Right lobe of liver (tissue), 6 donors: ENCODE measurements at regions of chr12 and their contacts with region 1.

Region 1: GRCh38 chr12:113912760-113913329 is 53.3 kb downstream of the RBM19 start:
- DNase-seq: peak in 2 of 3 donors; percentile 49 to 57
- ATAC-seq: peak; percentile 64 to 84 (median 78)
- H3K4me3 ChIP-seq: no peak overlapping the region
- H3K27ac ChIP-seq: no peak overlapping the region
- H3K4me1 ChIP-seq: no peaks in the 10 kb centered on the region
- H3K27me3 ChIP-seq: no peaks in the 10 kb centered on the region
- CTCF ChIP-seq: peak; percentile 68 to 83 (median 76)
- POLR2A ChIP-seq: no peak

Region 2: DNA sequence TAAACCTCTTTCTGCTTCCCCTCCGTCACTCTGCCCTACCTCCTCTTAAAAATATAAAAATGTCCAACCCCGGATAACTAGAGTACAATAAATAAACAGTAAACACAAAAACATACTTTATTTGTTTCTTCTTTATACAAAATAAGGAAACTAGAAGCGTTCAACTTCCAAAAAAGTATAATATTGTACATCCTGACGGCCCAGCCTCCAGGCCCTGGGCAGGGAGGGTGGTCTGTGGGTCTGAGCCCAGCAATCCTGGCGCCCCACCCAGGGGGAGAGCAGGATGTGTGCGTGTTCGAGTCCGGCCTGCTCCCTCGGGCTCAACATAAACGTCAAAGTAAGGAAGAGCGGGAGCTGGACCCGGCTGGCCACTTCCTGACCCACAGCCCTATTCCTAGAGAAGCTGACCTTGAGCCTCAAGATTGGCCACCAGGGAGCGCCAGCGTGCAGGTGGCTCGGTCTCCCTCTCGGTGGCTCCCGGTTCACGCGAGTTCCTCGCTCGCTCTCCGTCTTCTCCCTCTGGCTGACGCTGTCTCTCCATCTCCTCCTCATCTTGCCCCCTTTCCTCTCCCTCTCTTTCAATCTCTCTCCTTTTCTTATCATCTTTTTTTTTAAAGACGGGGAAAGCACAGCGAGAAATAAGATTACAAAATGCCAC is 450.6 kb before region 1 on chr12:
- intact Hi-C with region 1: loop called (anchors 10 kb)
- DNase-seq: peak; percentile 74 to 84 (median 77)
- ATAC-seq: peak; percentile 85 to 92 (median 90)
- H3K4me3 ChIP-seq: no peak overlapping the region
- H3K27ac ChIP-seq: no peak overlapping the region
- H3K4me1 ChIP-seq: peaks cover 0 to 12% (median 0%) of the 10 kb centered on the region in 4 donors
- H3K27me3 ChIP-seq: peaks cover 8 to 34% of the 10 kb centered on the region in 2 donors
- CTCF ChIP-seq: peak; percentile 57 to 90 (median 88)
- POLR2A ChIP-seq: no peak